H1 (cell line): ENCODE measurements at regions of chr1 and their contacts with region 1.

Region 1: DNA sequence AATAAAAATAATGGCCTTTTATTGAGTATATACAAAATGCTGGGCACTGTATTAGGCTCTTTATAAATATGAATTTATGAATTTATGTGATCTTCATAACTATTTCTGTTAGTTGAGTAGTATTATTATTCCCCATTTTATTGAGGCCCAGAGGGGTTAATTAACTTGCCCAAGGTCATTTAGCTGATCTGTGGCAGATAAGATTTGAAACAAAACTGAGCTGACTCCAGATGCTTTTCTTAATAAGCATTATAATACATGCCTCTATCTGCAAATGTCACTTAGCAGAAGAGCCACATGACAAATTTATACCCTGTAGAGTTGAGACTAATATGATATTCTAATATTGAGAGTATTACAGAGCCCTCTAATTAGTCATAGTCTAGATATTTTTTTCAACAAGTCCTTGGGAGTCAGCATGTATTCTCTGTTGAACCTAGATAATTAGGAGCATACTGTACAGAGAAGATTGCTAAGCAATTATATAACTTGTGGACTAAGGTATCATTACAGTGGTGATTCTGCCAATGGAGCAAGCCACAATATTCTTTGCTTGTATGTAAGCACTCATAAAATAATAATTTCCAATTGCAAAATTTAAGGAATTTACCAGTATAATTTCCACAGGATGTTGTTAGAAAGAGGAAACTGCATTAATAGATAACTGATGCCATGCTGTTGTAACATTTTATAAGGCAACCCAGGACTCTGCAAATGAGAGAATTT is 112.0 kb downstream of the LRRC40 start:
- DNase-seq: no peak
- H3K4me3 ChIP-seq: no peak overlapping the region
- H3K27ac ChIP-seq: no peak overlapping the region
- H3K4me1 ChIP-seq: 0 out of 7 replicates have a peak, but pooled peaks cover 0 to 2% (median 0%) of the 10 kb centered on the region in 4 experiments
- H3K27me3 ChIP-seq: no peaks in the 10 kb centered on the region
- CTCF ChIP-seq: no peak
- EP300 ChIP-seq: no peak
- POLR2A ChIP-seq: no peak
- RAD21 ChIP-seq: no peak

Region 2: DNA sequence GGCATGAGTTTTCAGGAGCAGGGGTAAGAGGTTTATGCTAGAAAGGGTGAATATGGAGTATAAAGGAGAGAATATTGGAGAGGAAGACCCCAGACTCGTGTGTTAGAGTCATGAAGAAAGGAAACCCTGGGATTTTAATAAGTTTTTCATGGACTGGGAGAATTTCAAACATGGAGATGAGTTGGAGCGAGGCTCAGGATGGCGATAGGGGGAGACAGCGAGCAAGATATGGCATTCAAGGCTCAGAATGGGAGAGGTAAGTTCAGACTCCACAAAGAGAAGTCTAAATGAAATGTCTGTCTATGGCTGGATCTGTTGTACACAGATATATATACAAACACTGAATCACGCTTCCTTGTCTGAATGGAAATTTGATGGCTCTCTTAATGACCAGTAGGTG is 19.4 kb after region 1 on chr1:
- CTCF ChIA-PET with region 1: interaction called, 10 read pairs
- POLR2A ChIA-PET with region 1: interaction called, 3 read pairs
- DNase-seq: no peak
- H3K4me3 ChIP-seq: no peak overlapping the region
- H3K27ac ChIP-seq: no peak overlapping the region
- H3K4me1 ChIP-seq: no peaks in the 10 kb centered on the region
- H3K27me3 ChIP-seq: peaks cover 0 to 1% (median 0%) of the 10 kb centered on the region in 4 experiments; a peak in 1 of 7 replicates
- CTCF ChIP-seq: peak; percentile 14 to 58 (median 58); a peak in 3 of 4 replicates
- EP300 ChIP-seq: no peak
- POLR2A ChIP-seq: no peak
- RAD21 ChIP-seq: peak; percentile 22 to 32; a peak in 3 of 4 replicates